HepG2 (cell line): ENCODE measurements at regions of chr6 and their contacts with region 1.

Region 1: GRCh38 chr6:131807644-131808459 is at the start of gene ENPP1:
- DNase-seq: peak; percentile 71
- ATAC-seq: peak; percentile 93
- H3K4me3 ChIP-seq: peak within 1 kb of the TSS; percentile 71 to 94 (median 91)
- H3K27ac ChIP-seq: peak within 1 kb of the TSS; percentile 70
- H3K4me1 ChIP-seq: peaks cover 72% of the 10 kb centered on the region
- H3K27me3 ChIP-seq: no peaks in the 10 kb centered on the region; a peak in 1 of 5 replicates
- CTCF ChIP-seq: peak; percentile 83
- EP300 ChIP-seq: no peak
- POLR2A ChIP-seq: peak; percentile 43 to 84; a peak in 3 of 4 replicates
- RAD21 ChIP-seq: peak; percentile 71
- total RNA-seq, gene ENPP1: 45.8 and 56.5 TPM in 2 replicates

Region 2: GRCh38 chr6:131694831-131695426 is 112.9 kb before region 1 on chr6:
- CTCF ChIA-PET with region 1: interaction called, 18 read pairs
- POLR2A ChIA-PET with region 1: interaction called, 5 read pairs
- in situ Hi-C with region 1: no loop called
- intact Hi-C with region 1: loop called (anchors 5 kb)
- DNase-seq: peak; percentile 77
- ATAC-seq: peak; percentile 100
- H3K4me3 ChIP-seq: no peak overlapping the region
- H3K27ac ChIP-seq: no peak overlapping the region
- H3K4me1 ChIP-seq: no peaks in the 10 kb centered on the region
- H3K27me3 ChIP-seq: no peaks in the 10 kb centered on the region
- CTCF ChIP-seq: peak; percentile 93
- EP300 ChIP-seq: no peak
- POLR2A ChIP-seq: no peak
- RAD21 ChIP-seq: peak; percentile 91

Region 3: GRCh38 chr6:131724114-131724513 is 83.7 kb before region 1 on chr6:
- CTCF ChIA-PET with region 1: no interaction called
- POLR2A ChIA-PET with region 1: no interaction called
- in situ Hi-C with region 1: no loop called
- intact Hi-C with region 1: no loop called
- DNase-seq: no peak
- ATAC-seq: no peak
- H3K4me3 ChIP-seq: no peak overlapping the region
- H3K27ac ChIP-seq: no peak overlapping the region
- H3K4me1 ChIP-seq: peaks cover 21% of the 10 kb centered on the region
- H3K27me3 ChIP-seq: no peaks in the 10 kb centered on the region
- CTCF ChIP-seq: no peak
- EP300 ChIP-seq: no peak
- POLR2A ChIP-seq: no peak
- RAD21 ChIP-seq: no peak

Region 4: GRCh38 chr6:131744432-131745287 is 63.2 kb before region 1 on chr6:
- CTCF ChIA-PET with region 1: no interaction called
- POLR2A ChIA-PET with region 1: no interaction called
- in situ Hi-C with region 1: no loop called
- intact Hi-C with region 1: no loop called
- DNase-seq: no peak
- ATAC-seq: no peak
- H3K4me3 ChIP-seq: no peak overlapping the region
- H3K27ac ChIP-seq: peak overlapping the region; percentile 3
- H3K4me1 ChIP-seq: peaks cover 15% of the 10 kb centered on the region
- H3K27me3 ChIP-seq: no peaks in the 10 kb centered on the region
- CTCF ChIP-seq: no peak
- EP300 ChIP-seq: no peak
- POLR2A ChIP-seq: no peak
- RAD21 ChIP-seq: no peak

Region 5: GRCh38 chr6:131765081-131765803 is 42.6 kb before region 1 on chr6:
- CTCF ChIA-PET with region 1: no interaction called
- POLR2A ChIA-PET with region 1: no interaction called
- in situ Hi-C with region 1: no loop called
- intact Hi-C with region 1: loop called (anchors 5 kb)
- DNase-seq: peak; percentile 83
- ATAC-seq: peak; percentile 65
- H3K4me3 ChIP-seq: peak overlapping the region in 2 of 3 experiments; percentile 1 to 2; a peak in 1 of 6 replicates
- H3K27ac ChIP-seq: peak overlapping the region; percentile 77
- H3K4me1 ChIP-seq: peaks cover 82% of the 10 kb centered on the region
- H3K27me3 ChIP-seq: no peaks in the 10 kb centered on the region
- CTCF ChIP-seq: no peak
- EP300 ChIP-seq: peak in 1 of 2 experiments; percentile 84; a peak in 2 of 4 replicates
- POLR2A ChIP-seq: no peak
- RAD21 ChIP-seq: no peak

Region 6: DNA sequence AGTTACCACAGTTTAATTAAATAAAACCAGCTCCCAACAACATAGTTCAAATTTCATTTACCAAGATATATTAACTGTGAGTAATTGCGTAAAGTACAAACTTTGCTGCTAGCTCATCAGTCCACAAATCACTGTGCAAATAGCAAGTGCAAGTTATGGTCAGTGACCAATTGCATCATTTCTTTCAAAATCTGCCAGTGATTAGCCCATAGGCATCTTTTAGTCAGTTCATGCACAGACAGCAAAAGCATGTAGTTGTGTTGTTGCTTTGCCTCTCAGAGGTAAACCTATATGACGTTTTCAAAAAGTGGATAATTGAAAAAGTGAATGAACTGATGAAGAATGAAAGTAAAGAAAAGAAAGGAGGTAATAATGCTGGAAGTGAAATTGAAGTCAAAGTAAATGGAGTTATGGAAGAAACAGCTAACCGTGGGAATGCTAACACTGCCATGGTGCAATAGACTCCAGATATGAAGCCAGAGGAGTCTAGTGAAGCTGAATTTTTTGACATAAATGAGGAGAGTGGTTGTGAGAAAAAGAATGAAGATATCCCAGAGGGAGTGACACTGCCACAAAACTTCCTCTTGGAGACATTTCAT is 36.5 kb after region 1 on chr6:
- CTCF ChIA-PET with region 1: no interaction called
- POLR2A ChIA-PET with region 1: interaction called, 25 read pairs
- in situ Hi-C with region 1: no loop called
- intact Hi-C with region 1: no loop called
- DNase-seq: peak; percentile 98
- ATAC-seq: peak; percentile 92
- H3K4me3 ChIP-seq: peak overlapping the region; percentile 65 to 80 (median 74)
- H3K27ac ChIP-seq: peak overlapping the region; percentile 66
- H3K4me1 ChIP-seq: peaks cover 93% of the 10 kb centered on the region
- H3K27me3 ChIP-seq: no peaks in the 10 kb centered on the region; a peak in 1 of 5 replicates
- CTCF ChIP-seq: no peak
- EP300 ChIP-seq: peak; percentile 86 to 97; a peak in 3 of 4 replicates
- POLR2A ChIP-seq: peak; percentile 72 to 73; a peak in 3 of 4 replicates
- RAD21 ChIP-seq: no peak; the same call in 1 of the 2 replicates

Region 7: DNA sequence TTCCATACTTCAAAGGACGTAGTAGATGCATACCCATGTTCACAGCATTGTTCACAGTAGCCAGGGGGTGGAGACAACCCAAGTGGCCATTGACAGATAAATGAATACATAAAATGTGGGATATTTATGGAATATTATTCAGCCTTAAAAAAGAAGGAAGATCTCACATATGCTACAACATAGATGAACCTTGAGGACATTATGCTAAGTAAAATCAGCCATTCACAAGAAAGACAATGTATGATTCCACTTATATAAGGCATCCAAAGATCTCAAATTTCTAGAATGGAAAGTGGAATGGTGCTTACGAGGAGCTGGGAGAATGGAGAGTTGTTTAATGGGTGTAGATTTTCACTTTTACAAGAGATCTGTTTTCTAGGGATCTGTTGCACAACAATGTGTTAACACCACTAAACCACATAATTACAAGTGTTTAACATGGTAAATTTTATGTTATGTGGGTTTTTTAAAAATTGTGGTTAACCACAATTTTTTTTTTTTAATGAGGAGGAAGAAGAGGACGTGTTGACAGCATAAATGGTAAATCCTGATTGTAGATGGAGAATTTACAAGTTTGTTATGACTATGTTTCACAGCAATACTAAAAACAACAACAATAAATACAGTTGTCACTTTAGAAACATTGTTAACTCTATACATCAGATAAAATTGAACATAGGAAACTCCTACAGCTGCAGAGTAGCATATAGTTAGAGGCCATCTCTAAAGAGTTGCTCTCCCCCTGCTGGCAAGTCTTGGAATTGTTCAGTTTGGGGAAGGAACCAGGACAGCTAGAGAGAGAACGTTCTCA is 101.8 kb after region 1 on chr6:
- CTCF ChIA-PET with region 1: no interaction called
- POLR2A ChIA-PET with region 1: interaction called, 3 read pairs
- in situ Hi-C with region 1: no loop called
- intact Hi-C with region 1: loop called (anchors 2 kb)
- DNase-seq: peak; percentile 79
- ATAC-seq: peak; percentile 97
- H3K4me3 ChIP-seq: no peak overlapping the region
- H3K27ac ChIP-seq: no peak overlapping the region
- H3K4me1 ChIP-seq: peaks cover 7% of the 10 kb centered on the region; the same call in 1 of the 2 replicates
- H3K27me3 ChIP-seq: no peaks in the 10 kb centered on the region
- CTCF ChIP-seq: peak; percentile 90
- EP300 ChIP-seq: no peak
- POLR2A ChIP-seq: no peak
- RAD21 ChIP-seq: peak; percentile 84

Region 8: GRCh38 chr6:132179955-132180354 is 372.1 kb after region 1 on chr6:
- CTCF ChIA-PET with region 1: no interaction called
- POLR2A ChIA-PET with region 1: no interaction called
- in situ Hi-C with region 1: no loop called
- intact Hi-C with region 1: no loop called
- DNase-seq: no peak
- ATAC-seq: no peak; the same call in 2 of the 3 replicates
- H3K4me3 ChIP-seq: no peak overlapping the region
- H3K27ac ChIP-seq: no peak overlapping the region
- H3K4me1 ChIP-seq: no peaks in the 10 kb centered on the region
- H3K27me3 ChIP-seq: no peaks in the 10 kb centered on the region
- CTCF ChIP-seq: no peak
- EP300 ChIP-seq: no peak
- POLR2A ChIP-seq: no peak
- RAD21 ChIP-seq: no peak